ENCODE measurements at regions of chr12 and their contacts with region 1.

Region 1: GRCh38 chr12:104456417-104456949 is at the start of gene CHST11:
- DNase-seq: peak; percentile 95 to 96
- ATAC-seq: peak; percentile 95
- H3K4me3 ChIP-seq: peak within 1 kb of the TSS; percentile 66 to 90
- H3K27ac ChIP-seq: peak within 1 kb of the TSS; percentile 58 to 73
- H3K4me1 ChIP-seq: no peaks in the 10 kb centered on the region
- H3K27me3 ChIP-seq: no peaks in the 10 kb centered on the region
- total RNA-seq, gene CHST11: 27.2 to 31.0 TPM

Region 2: DNA sequence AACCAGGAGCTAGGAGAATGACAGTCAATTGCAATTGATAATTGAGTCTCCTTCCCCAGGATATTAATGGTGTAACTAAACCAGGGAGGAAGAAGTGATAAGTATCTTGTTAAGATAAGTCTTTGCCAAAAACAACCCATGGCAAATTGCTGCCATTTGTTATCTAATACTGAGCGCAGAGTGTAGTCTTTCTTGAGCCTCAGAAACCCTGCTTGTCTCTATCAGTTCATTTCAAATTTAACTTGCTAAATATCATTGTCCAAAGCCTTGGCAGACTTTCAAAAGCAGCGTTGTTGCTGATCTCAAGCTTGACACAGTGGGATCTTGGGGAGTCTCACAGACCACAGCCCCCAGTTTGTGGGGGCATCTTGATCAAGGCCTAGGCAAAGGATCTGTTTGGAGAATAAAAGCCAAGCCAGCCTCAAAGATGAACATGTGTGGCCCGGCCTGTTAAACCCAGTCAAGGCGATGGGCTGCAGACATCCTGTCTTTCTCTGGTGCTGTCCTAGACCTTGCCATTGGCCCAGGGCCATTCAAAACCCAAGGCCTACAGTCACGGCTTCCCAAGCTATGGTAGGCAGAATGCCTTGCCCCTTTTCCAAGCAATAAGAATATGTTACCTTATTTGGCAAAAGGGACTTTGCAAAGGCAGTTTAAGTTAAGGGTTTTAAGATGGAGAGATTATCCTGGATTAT is 164.5 kb after region 1 on chr12:
- intact Hi-C with region 1: loop called in 1 of 2 experiments (anchors 5 kb)
- DNase-seq: peak in 1 of 2 donors; percentile 72
- ATAC-seq: peak; percentile 60
- H3K4me3 ChIP-seq: no peak overlapping the region
- H3K27ac ChIP-seq: peak overlapping the region in 1 of 2 donors; percentile 58
- H3K4me1 ChIP-seq: peaks cover 0 to 2% of the 10 kb centered on the region in 2 donors
- H3K27me3 ChIP-seq: no peaks in the 10 kb centered on the region

Region 3: DNA sequence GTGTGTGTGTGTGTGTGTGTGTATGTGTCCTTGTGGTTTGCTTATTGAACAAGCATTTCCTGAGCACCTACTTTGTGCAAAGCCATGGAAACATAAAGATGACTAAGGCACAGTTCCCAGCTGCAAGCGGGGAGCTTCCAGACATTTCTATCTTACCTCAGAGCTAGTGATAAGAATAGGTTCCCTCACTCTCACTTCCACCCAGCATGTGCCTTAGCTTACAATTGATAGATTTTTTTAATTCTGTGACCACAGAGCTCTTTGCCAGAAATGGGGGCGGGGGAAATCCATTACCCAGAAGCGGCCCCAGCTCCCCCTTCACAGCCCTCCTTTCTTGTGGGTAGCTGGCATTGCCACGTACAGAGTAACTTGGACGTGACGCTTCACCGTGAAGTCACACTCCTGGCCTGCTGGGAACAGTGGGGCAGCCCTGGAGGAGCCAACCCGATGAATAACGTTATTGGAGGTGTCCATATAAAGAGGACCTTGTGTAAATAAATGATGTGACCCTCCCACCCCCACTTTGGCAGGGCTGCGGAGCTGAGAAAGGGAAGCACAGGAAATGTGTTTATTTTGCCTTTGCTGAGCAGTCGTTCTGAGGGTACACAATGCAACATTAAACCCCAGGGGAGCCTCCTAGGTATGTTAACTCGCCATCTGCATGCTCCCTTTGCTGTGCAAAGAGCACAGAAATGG is 239.1 kb after region 1 on chr12:
- intact Hi-C with region 1: loop called in 1 of 2 experiments (anchors 5 kb)
- DNase-seq: peak; percentile 76 to 86
- ATAC-seq: peak; percentile 81
- H3K4me3 ChIP-seq: no peak overlapping the region
- H3K27ac ChIP-seq: peak overlapping the region in 1 of 2 donors; percentile 4
- H3K4me1 ChIP-seq: no peaks in the 10 kb centered on the region
- H3K27me3 ChIP-seq: no peaks in the 10 kb centered on the region

Region 4: DNA sequence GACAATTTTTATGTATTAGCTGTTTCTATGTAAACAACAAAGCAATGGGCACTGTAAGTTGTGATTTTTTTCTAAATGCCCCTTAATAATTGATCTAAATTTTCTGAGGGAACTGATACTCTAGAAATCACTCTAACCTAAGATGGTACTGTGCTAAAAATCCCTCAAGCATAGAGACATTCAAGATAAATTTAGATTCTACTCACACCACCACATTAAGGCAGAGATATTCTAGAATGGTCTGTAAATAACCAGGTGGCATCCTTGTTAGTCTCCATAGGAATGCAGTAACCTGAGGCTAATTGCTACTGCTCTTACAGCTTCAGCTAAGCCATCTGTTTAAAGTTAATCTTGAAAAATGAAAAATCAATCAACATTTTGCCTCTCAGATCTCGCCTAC is 414.3 kb after region 1 on chr12:
- intact Hi-C with region 1: loop called (anchors 5 kb)
- DNase-seq: no peak
- ATAC-seq: no peak
- H3K4me3 ChIP-seq: no peak overlapping the region
- H3K27ac ChIP-seq: no peak overlapping the region
- H3K4me1 ChIP-seq: no peaks in the 10 kb centered on the region
- H3K27me3 ChIP-seq: no peaks in the 10 kb centered on the region

Measured in aorta (tissue), 5 donors.